K562 (cell line): ENCODE measurements at regions of chr12 and their contacts with region 1.

Region 1: GRCh38 chr12:131673888-131674257 is 37.0 kb upstream of the SFSWAP start:
- DNase-seq: no peak
- ATAC-seq: no peak
- H3K4me3 ChIP-seq: no peak overlapping the region
- H3K27ac ChIP-seq: no peak overlapping the region
- H3K4me1 ChIP-seq: peaks cover 0 to 10% of the 10 kb centered on the region in 2 experiments; a peak in 1 of 5 replicates
- H3K27me3 ChIP-seq: peaks cover 27 to 48% of the 10 kb centered on the region in 2 experiments
- CTCF ChIP-seq: no peak
- EP300 ChIP-seq: no peak
- POLR2A ChIP-seq: no peak
- RAD21 ChIP-seq: no peak

Region 2: GRCh38 chr12:130070126-130070611 is 1603.7 kb before region 1 on chr12:
- CTCF ChIA-PET with region 1: no interaction called
- POLR2A ChIA-PET with region 1: no interaction called
- in situ Hi-C with region 1: loop called (anchors 10 kb)
- intact Hi-C with region 1: no loop called
- DNase-seq: peak; percentile 29 to 75 (median 70)
- ATAC-seq: peak; percentile 76
- H3K4me3 ChIP-seq: no peak overlapping the region
- H3K27ac ChIP-seq: no peak overlapping the region
- H3K4me1 ChIP-seq: peaks cover 0 to 4% of the 10 kb centered on the region in 2 experiments; a peak in 1 of 5 replicates
- H3K27me3 ChIP-seq: peaks cover 0 to 11% of the 10 kb centered on the region in 2 experiments; a peak in 2 of 5 replicates
- CTCF ChIP-seq: no peak
- EP300 ChIP-seq: no peak
- POLR2A ChIP-seq: no peak
- RAD21 ChIP-seq: no peak

Region 3: DNA sequence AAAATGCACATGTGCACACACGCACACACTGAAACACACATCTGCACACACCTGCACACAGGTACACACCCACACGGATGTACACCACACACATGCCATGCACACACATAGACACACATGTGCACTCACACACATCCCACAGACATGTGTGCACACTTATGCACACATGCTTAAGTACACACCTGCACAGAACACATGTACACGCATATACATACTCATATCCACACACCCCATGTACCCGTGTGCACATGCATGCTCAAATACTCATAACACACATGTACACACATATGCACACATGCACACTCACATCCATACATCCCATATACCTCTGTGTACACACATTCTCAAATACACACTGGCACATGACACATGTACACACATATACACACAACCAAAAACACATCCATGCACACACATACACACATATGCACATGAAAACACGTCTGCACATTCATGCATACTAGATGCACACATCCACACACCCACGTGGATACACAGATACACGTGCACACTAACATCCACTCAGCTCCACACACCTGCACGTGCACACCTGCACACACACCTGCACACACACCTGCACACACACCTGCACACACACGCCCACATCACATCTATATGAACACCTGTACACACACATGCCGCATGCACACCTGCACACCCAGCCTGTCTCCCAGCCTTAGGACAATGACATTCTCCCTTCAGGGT is 383.5 kb before region 1 on chr12:
- CTCF ChIA-PET with region 1: no interaction called
- POLR2A ChIA-PET with region 1: no interaction called
- in situ Hi-C with region 1: loop called (anchors 5 kb)
- intact Hi-C with region 1: no loop called
- DNase-seq: no peak
- ATAC-seq: no peak
- H3K4me3 ChIP-seq: no peak overlapping the region
- H3K27ac ChIP-seq: no peak overlapping the region
- H3K4me1 ChIP-seq: peaks cover 0 to 5% of the 10 kb centered on the region in 2 experiments; a peak in 2 of 5 replicates
- H3K27me3 ChIP-seq: peaks cover 3 to 26% of the 10 kb centered on the region in 2 experiments; a peak in 3 of 5 replicates
- CTCF ChIP-seq: no peak
- EP300 ChIP-seq: no peak
- POLR2A ChIP-seq: no peak
- RAD21 ChIP-seq: no peak